IMR-90 (cell line): ENCODE measurements at regions of chr4 and their contacts with region 1.

Region 1: GRCh38 chr4:7929118-7929951 is 10.3 kb downstream of the AFAP1 start:
- DNase-seq: no peak
- ATAC-seq: peak; percentile 38
- H3K4me3 ChIP-seq: no peak overlapping the region
- H3K27ac ChIP-seq: no peak overlapping the region
- H3K4me1 ChIP-seq: peaks cover 34% of the 10 kb centered on the region
- H3K27me3 ChIP-seq: no peaks in the 10 kb centered on the region
- CTCF ChIP-seq: peak; percentile 44
- POLR2A ChIP-seq: 0 out of 2 replicates have a peak, but pooled peaks have one; percentile 18
- RAD21 ChIP-seq: peak; percentile 53

Region 2: DNA sequence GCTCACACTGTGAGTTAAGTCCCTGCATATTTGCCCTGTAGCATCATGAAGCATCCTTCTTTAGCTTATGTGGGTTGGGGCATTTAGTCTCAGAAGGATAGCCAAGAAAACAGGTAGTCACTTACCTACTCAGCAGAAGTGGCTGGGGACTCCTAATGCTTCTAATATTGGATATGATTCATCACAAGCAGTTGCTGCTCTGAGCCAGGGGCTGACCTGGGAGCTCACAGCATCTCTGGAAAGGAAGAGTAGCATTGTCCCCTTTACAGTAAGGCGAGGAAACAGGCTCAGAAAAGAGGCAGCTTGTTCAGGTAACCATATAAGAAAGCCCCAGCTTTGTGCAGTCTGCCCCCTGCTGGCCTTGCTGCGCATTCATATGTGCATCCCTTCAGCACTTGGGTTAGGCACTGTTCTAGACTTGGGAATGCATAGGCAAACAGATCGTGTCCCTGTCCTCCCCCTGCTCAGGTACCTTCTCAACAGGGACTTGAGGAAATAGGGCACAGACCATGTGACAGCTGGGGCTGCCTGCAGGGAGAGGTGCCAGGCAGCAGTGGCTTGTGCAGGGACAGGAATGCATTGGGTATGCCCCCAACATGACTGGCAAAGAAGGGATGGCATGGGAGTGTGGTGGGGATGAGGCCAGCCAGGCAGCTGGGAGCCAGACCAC is 1055.4 kb before region 1 on chr4:
- CTCF ChIA-PET with region 1: no interaction called
- POLR2A ChIA-PET with region 1: no interaction called
- dilution Hi-C with region 1: no loop called
- in situ Hi-C with region 1: no loop called
- intact Hi-C with region 1: no loop called
- DNase-seq: peak; percentile 62
- ATAC-seq: peak; percentile 84
- H3K4me3 ChIP-seq: no peak overlapping the region
- H3K27ac ChIP-seq: no peak overlapping the region
- H3K4me1 ChIP-seq: peaks cover 4% of the 10 kb centered on the region
- H3K27me3 ChIP-seq: no peaks in the 10 kb centered on the region
- CTCF ChIP-seq: peak; percentile 80
- POLR2A ChIP-seq: no peak
- RAD21 ChIP-seq: peak; percentile 84

Region 3: DNA sequence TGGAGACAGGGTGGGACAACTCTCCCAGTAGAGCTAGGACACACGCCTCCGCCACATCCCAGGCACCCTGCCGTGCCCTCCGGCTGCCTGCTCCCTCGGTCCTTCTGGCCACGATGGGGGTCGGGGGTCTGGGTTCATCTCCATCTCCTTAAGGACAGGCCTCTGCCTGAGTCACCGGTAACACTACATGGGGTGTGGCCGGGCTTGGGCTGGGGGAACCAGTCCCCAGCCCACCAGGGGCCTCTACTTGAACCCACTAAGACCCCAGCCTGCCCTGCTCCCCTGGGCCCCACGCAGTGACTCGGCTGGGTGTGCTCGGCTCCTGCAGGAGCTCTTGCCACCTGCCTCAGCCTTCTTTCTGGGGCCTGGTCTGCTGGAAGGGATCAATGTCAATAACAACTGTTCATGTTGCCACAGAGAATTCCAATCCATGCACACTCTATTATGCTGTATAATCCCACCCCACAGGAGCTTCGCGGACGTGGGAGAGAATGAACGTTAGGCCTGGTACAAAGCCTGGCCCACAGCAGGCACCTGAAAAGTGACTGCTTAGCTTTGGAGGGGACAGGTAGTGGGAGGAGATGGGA is 316.9 kb before region 1 on chr4:
- CTCF ChIA-PET with region 1: no interaction called
- POLR2A ChIA-PET with region 1: no interaction called
- dilution Hi-C with region 1: no loop called
- in situ Hi-C with region 1: no loop called
- intact Hi-C with region 1: no loop called
- DNase-seq: no peak
- ATAC-seq: no peak
- H3K4me3 ChIP-seq: no peak overlapping the region
- H3K27ac ChIP-seq: no peak overlapping the region
- H3K4me1 ChIP-seq: no peaks in the 10 kb centered on the region
- H3K27me3 ChIP-seq: peaks cover 31% of the 10 kb centered on the region
- CTCF ChIP-seq: no peak
- POLR2A ChIP-seq: no peak
- RAD21 ChIP-seq: no peak

Region 4: GRCh38 chr4:7802093-7802726 is 127.1 kb before region 1 on chr4:
- CTCF ChIA-PET with region 1: interaction called, 5 read pairs
- POLR2A ChIA-PET with region 1: no interaction called
- dilution Hi-C with region 1: no loop called
- in situ Hi-C with region 1: no loop called
- intact Hi-C with region 1: loop called (anchors 2 kb)
- DNase-seq: peak; percentile 85
- ATAC-seq: peak; percentile 84
- H3K4me3 ChIP-seq: no peak overlapping the region
- H3K27ac ChIP-seq: no peak overlapping the region
- H3K4me1 ChIP-seq: peaks cover 23% of the 10 kb centered on the region
- H3K27me3 ChIP-seq: no peaks in the 10 kb centered on the region
- CTCF ChIP-seq: peak; percentile 79
- POLR2A ChIP-seq: no peak
- RAD21 ChIP-seq: peak; percentile 67

Region 5: DNA sequence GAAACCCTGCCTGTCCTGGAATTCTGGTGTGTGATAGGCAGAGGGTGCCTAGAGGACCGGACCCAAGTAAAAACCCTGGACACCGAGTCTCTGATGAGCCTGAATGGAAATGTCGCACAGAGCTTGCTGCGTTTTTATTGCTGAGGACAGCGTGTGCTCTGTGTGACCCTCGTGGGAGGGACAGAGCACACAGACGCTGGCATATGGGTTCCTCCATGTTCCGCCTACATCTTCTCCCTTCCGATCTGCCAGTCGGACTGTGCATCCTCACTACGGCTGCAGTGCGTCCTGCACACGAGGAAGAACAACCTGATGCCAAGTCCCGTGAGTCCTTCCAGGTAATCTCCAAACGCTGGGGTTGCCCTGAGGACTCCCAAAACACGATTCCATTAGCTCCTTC is 58.0 kb before region 1 on chr4:
- CTCF ChIA-PET with region 1: no interaction called
- POLR2A ChIA-PET with region 1: no interaction called
- dilution Hi-C with region 1: no loop called
- in situ Hi-C with region 1: no loop called
- intact Hi-C with region 1: no loop called
- DNase-seq: no peak
- ATAC-seq: no peak
- H3K4me3 ChIP-seq: peak overlapping the region; percentile 6; the same call in 1 of the 2 replicates
- H3K27ac ChIP-seq: peak overlapping the region; percentile 83
- H3K4me1 ChIP-seq: peaks cover 30% of the 10 kb centered on the region
- H3K27me3 ChIP-seq: no peaks in the 10 kb centered on the region
- CTCF ChIP-seq: no peak
- POLR2A ChIP-seq: no peak
- RAD21 ChIP-seq: no peak

Region 6: GRCh38 chr4:7987148-7987989 is 58.0 kb after region 1 on chr4:
- CTCF ChIA-PET with region 1: no interaction called
- POLR2A ChIA-PET with region 1: no interaction called
- dilution Hi-C with region 1: no loop called
- in situ Hi-C with region 1: no loop called
- intact Hi-C with region 1: no loop called
- DNase-seq: peak; percentile 77
- ATAC-seq: peak; percentile 87
- H3K4me3 ChIP-seq: no peak overlapping the region
- H3K27ac ChIP-seq: no peak overlapping the region
- H3K4me1 ChIP-seq: peaks cover 12% of the 10 kb centered on the region
- H3K27me3 ChIP-seq: peaks cover 5% of the 10 kb centered on the region; the same call in 1 of the 2 replicates
- CTCF ChIP-seq: peak; percentile 95
- POLR2A ChIP-seq: 0 out of 2 replicates have a peak, but pooled peaks have one; percentile 38
- RAD21 ChIP-seq: peak; percentile 97